ENCODE measurements at regions of chr20 and their contacts with region 1.

Region 1: GRCh38 chr20:48620519-48621254 is 207.1 kb downstream of the PREX1 start:
- DNase-seq: peak; percentile 90
- H3K4me3 ChIP-seq: peak overlapping the region; percentile 33 to 52; a peak in 3 of 4 replicates
- H3K27ac ChIP-seq: peak overlapping the region in 1 of 2 experiments; percentile 83; a peak in 2 of 4 replicates
- H3K4me1 ChIP-seq: peaks cover 0 to 27% of the 10 kb centered on the region in 2 experiments; a peak in 2 of 4 replicates
- H3K27me3 ChIP-seq: no peaks in the 10 kb centered on the region
- CTCF ChIP-seq: peak; percentile 82
- EP300 ChIP-seq: no peak
- RAD21 ChIP-seq: peak; percentile 97

Region 2: DNA sequence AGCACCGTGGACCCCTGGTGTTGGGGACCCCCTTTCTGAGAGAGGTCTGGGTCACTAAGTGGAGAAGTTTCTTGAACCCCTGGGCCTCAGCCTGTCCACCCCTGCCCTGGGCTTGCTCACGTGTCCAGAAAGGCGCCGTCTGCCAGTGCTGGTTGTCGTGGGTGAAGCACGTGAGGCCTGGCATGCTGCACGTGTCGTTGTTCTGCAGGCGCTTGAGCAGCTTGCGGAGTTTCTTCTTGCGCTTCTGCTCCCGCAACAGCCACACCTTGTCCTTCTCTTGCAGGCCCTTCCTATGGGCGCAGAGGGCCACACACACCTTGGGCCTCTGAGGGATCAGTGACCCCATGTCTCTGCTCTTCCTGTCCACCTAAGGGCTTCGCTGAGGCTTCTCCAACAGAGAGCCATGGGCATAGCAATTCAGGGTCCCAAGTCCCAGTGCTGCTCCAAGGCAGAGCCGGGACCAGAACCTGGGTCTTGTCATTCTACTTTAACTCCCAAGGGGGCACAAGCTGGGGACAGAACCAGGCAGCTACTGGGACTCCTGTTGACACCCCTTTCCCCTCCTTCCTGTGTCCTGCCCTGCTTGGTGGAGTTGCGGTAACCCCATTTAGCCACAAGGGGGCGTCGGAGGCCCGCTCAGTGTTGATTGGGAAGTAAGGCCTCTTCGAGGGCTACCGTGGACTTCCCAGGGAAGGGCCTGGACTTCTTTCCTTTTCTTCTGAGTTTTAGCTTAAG is 957.2 kb before region 1 on chr20:
- CTCF ChIA-PET with region 1: interaction called, 437 read pairs
- POLR2A ChIA-PET with region 1: no interaction called
- DNase-seq: peak; percentile 87
- H3K4me3 ChIP-seq: peak overlapping the region in 1 of 2 experiments; percentile 20; a peak in 1 of 4 replicates
- H3K27ac ChIP-seq: no peak overlapping the region
- H3K4me1 ChIP-seq: peaks cover 3 to 4% of the 10 kb centered on the region in 2 experiments; a peak in 2 of 4 replicates
- H3K27me3 ChIP-seq: no peaks in the 10 kb centered on the region
- CTCF ChIP-seq: peak; percentile 95
- EP300 ChIP-seq: no peak
- RAD21 ChIP-seq: peak; percentile 92

Region 3: DNA sequence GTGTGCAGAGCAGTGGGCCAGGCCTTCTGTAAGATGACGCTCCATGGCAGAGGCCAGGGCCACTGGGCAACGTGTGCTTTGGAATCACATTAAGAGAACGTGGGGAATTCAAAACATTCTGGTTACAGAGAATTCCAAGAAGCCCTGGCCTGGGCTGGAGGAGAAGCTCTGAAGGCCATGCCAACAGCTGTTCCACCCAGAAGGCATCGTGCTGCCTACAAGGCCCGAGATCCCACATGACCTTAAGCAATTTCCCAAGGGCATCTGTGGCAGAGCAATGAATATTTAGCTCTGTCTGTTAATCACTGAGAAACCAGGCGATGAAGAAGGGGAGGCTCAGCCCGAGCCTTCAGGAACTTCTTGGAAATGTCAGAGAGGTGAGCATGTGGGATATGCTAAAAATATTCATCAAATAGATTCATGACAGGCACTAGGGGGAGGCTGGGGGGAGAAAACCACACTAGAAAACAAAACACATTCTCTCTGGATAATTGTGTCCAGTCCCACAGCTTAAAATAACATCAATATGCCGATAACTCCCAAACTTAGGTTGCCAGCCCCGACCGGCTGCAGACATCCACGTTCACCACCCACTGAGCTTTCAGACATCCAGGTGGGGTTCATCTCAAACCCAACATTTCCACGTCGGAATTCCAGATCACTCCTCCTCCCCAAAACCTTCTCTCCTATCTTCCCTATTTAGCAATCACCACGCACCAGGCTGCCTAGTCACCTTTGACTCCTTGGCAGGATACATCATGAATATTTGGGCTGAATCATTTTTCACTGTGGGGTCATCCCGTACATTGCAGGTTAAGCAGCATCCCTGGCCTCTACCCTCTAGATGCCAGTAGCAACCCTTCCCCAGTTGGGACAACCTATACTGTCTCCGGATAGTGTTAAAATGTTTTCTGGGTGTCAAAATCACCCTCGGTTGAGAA is 842.0 kb before region 1 on chr20:
- CTCF ChIA-PET with region 1: interaction called, 50 read pairs
- POLR2A ChIA-PET with region 1: no interaction called
- DNase-seq: no peak
- H3K4me3 ChIP-seq: no peak overlapping the region
- H3K27ac ChIP-seq: no peak overlapping the region
- H3K4me1 ChIP-seq: peaks cover 0 to 40% of the 10 kb centered on the region in 2 experiments; a peak in 2 of 4 replicates
- H3K27me3 ChIP-seq: 0 out of 2 replicates have a peak, but pooled peaks cover 3% of the 10 kb centered on the region
- CTCF ChIP-seq: no peak
- EP300 ChIP-seq: no peak
- RAD21 ChIP-seq: no peak

Region 4: DNA sequence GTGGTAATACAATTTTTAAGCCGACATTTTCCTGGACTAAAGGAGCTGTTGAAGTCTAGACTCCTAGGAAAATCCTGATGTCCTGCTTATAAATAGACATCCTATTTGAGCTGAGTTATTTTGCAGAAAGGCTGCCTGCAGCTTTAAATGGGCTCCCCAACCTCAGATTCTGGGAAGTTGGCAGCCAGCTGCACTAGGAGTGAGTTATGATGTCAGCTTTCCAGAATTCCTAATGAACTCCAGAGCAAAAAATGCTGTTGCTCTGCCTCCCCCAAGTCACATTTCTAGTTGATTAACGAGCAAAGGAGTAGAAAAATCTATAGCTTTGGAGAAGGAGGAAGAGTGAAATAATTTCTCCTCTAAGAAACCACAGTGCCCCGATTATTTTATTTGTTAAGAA is 489.1 kb before region 1 on chr20:
- CTCF ChIA-PET with region 1: interaction called, 10 read pairs
- POLR2A ChIA-PET with region 1: no interaction called
- DNase-seq: no peak
- H3K4me3 ChIP-seq: no peak overlapping the region
- H3K27ac ChIP-seq: no peak overlapping the region
- H3K4me1 ChIP-seq: no peaks in the 10 kb centered on the region
- H3K27me3 ChIP-seq: no peaks in the 10 kb centered on the region
- CTCF ChIP-seq: no peak
- EP300 ChIP-seq: no peak
- RAD21 ChIP-seq: no peak

Region 5: GRCh38 chr20:48339190-48340062 is 281.3 kb before region 1 on chr20:
- CTCF ChIA-PET with region 1: interaction called, 13 read pairs
- POLR2A ChIA-PET with region 1: no interaction called
- DNase-seq: no peak
- H3K4me3 ChIP-seq: no peak overlapping the region
- H3K27ac ChIP-seq: peak overlapping the region; percentile 53 to 87
- H3K4me1 ChIP-seq: peaks cover 2 to 8% of the 10 kb centered on the region in 2 experiments; a peak in 1 of 4 replicates
- H3K27me3 ChIP-seq: no peaks in the 10 kb centered on the region
- CTCF ChIP-seq: no peak
- EP300 ChIP-seq: peak in 1 of 2 experiments; percentile 37; a peak in 1 of 4 replicates
- RAD21 ChIP-seq: no peak

Region 6: GRCh38 chr20:48526936-48527702 is 93.6 kb before region 1 on chr20:
- CTCF ChIA-PET with region 1: interaction called, 13 read pairs
- POLR2A ChIA-PET with region 1: no interaction called
- DNase-seq: no peak
- H3K4me3 ChIP-seq: no peak overlapping the region
- H3K27ac ChIP-seq: no peak overlapping the region
- H3K4me1 ChIP-seq: peaks cover 0 to 5% of the 10 kb centered on the region in 2 experiments; a peak in 1 of 4 replicates
- H3K27me3 ChIP-seq: no peaks in the 10 kb centered on the region
- CTCF ChIP-seq: no peak
- EP300 ChIP-seq: no peak
- RAD21 ChIP-seq: no peak

Region 7: GRCh38 chr20:48635433-48636310 is 15.0 kb after region 1 on chr20:
- CTCF ChIA-PET with region 1: interaction called, 105 read pairs
- POLR2A ChIA-PET with region 1: interaction called, 3 read pairs
- DNase-seq: peak; percentile 90
- H3K4me3 ChIP-seq: no peak overlapping the region
- H3K27ac ChIP-seq: no peak overlapping the region
- H3K4me1 ChIP-seq: peaks cover 0 to 20% of the 10 kb centered on the region in 2 experiments; a peak in 1 of 4 replicates
- H3K27me3 ChIP-seq: no peaks in the 10 kb centered on the region
- CTCF ChIP-seq: peak; percentile 90
- EP300 ChIP-seq: no peak
- RAD21 ChIP-seq: peak; percentile 90

Region 8: DNA sequence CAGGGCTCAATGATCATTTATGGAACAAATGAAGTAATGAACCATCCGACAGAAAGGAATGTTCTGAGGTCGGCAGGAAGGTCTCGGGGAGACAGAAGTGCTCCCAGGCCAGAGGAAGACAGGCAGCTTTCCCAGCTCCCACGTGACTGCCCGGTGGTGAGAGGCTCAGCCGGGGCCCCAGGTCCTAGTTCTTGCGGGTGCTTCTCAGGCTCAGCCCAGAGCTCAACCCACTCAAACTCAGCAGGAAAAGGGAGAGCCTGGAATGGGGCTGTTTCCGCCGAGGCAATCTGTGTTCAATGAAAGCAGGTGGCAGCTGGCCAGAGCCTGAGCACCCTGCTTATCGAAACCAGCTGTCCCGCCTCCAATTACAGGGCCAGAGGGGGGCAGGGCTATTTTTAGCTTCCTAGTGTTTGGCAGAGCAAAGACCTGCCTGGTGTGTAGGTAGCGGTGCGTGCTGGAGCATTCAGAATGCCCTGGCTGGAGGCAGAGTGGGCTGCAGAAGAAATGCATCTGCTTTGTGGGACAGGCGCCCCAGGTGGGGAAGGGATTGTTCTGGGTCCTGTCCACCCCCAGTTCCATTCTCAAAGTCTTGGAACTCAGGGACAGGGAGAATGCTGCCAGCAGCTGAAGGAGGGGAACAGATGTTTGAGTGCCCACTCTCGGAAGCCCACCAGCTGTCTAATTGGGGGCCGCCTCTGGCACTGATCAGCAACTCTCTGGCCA is 62.0 kb after region 1 on chr20:
- CTCF ChIA-PET with region 1: no interaction called
- POLR2A ChIA-PET with region 1: no interaction called
- DNase-seq: peak; percentile 93
- H3K4me3 ChIP-seq: peak overlapping the region; percentile 25 to 46; a peak in 3 of 4 replicates
- H3K27ac ChIP-seq: peak overlapping the region; percentile 85 to 97
- H3K4me1 ChIP-seq: peaks cover 52 to 64% of the 10 kb centered on the region in 2 experiments
- H3K27me3 ChIP-seq: no peaks in the 10 kb centered on the region
- CTCF ChIP-seq: no peak
- EP300 ChIP-seq: peak; percentile 86 to 89
- RAD21 ChIP-seq: peak; percentile 37; the same call in 1 of the 2 replicates

Measured in SK-N-SH (cell line).